Activated T-helper 1 cell treated with anti-CD3 and anti-CD28 coated beads, Interleukin-12 subunit alpha, Interleukin-12 subunit beta, Interleukin-2, Interleukin-4 antibody, amounts not matched to agents 30 ng/mL and 10 ng/mL and 1 ng/mL, durations not matched to agents 14 hours and 24 hours and 36 hours (primary cell): ENCODE measurements at regions of chr21 and their contacts with region 1.

Region 1: GRCh38 chr21:33324291-33325221 is at the start of gene IFNAR1:
- DNase-seq: peak; percentile 98
- H3K4me3 Mint-ChIP-seq: no peak within 1 kb of the TSS
- H3K27ac Mint-ChIP-seq: no peak within 1 kb of the TSS
- H3K4me1 Mint-ChIP-seq: peaks cover 23% of the 10 kb centered on the region
- H3K27me3 Mint-ChIP-seq: peaks cover 6% of the 10 kb centered on the region
- total RNA-seq, gene IFNAR1: 20.4 and 20.7 TPM in 2 replicates

Region 2: GRCh38 chr21:33185852-33186251 is 138.7 kb before region 1 on chr21:
- intact Hi-C with region 1: no loop called
- DNase-seq: no peak
- H3K4me3 Mint-ChIP-seq: peak overlapping the region; percentile 30
- H3K27ac Mint-ChIP-seq: peak overlapping the region; percentile 57
- H3K4me1 Mint-ChIP-seq: peaks cover 16% of the 10 kb centered on the region
- H3K27me3 Mint-ChIP-seq: peaks cover 2% of the 10 kb centered on the region

Region 3: GRCh38 chr21:33238565-33239255 is 85.8 kb before region 1 on chr21:
- intact Hi-C with region 1: loop called (anchors 2 kb)
- DNase-seq: no peak
- H3K4me3 Mint-ChIP-seq: peak overlapping the region; percentile 51
- H3K27ac Mint-ChIP-seq: peak overlapping the region; percentile 91
- H3K4me1 Mint-ChIP-seq: peaks cover 66% of the 10 kb centered on the region
- H3K27me3 Mint-ChIP-seq: no peaks in the 10 kb centered on the region

Region 4: DNA sequence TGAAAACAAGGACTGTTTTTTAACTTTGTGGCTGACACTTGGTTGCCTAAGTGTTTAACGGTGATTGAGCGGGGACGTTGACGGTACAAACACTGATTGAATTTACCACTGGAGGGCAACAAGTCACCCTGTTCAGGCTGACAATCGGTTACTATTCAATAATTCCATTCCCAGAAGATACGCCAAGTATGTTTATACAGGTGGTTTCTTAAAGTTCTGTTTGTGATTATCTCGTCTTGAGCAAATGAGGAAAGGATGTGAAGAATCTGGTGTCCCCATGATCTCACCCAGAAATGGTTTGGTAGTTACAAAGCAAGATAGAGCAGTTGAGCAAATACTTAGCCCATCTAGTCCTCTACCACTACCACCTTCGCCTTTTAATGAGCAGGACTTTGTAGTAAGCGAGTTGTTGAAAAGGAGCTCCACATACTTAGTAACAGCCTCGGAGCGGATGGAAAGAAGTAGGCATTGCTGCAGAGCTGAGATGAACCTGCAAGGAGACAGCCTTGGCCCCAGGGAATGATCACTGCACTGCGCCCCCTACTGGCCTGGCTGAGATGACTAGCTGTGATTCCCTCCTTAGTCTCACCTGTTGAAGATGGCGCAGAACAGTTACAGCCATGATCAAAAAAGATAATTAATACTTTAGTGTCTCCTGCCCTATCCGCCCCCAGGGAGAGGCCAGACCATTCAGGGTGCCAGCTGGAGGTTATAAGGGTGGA is 36.5 kb after region 1 on chr21:
- intact Hi-C with region 1: loop called (anchors 1 kb)
- DNase-seq: peak; percentile 72
- H3K4me3 Mint-ChIP-seq: peak overlapping the region; percentile 83
- H3K27ac Mint-ChIP-seq: peak overlapping the region; percentile 64
- H3K4me1 Mint-ChIP-seq: peaks cover 21% of the 10 kb centered on the region
- H3K27me3 Mint-ChIP-seq: no peaks in the 10 kb centered on the region

Region 5: GRCh38 chr21:33434770-33435360 is 110.3 kb after region 1 on chr21:
- intact Hi-C with region 1: loop called (anchors 2 kb)
- DNase-seq: peak; percentile 33
- H3K4me3 Mint-ChIP-seq: peak overlapping the region; percentile 13
- H3K27ac Mint-ChIP-seq: peak overlapping the region; percentile 33
- H3K4me1 Mint-ChIP-seq: peaks cover 33% of the 10 kb centered on the region
- H3K27me3 Mint-ChIP-seq: peaks cover 4% of the 10 kb centered on the region